Naive thymus-derived CD8-positive, alpha-beta T cell (primary cell): ENCODE measurements at regions of chr12 and their contacts with region 1.

Region 1: DNA sequence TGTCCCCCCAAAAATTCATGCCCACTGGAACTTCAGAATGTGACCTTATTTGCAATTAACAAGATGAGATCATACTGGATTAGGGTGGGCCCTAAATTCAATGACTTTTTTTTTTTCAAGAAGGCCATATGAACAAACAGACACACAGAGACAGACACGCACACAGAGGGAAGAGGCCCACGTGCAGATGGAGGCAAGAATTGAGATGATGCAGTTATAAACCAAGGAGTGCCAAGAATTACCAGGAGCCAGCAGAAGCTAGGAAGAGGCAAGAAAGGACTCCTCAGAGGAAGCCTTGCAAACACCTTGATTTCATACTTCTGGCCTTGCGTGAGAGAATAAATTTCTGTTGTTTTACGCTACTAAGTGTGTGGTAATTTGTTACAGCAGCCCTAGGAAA is 33.4 kb downstream of the NELL2 start:
- DNase-seq: peak in 4 of 10 donors; percentile 33 to 58 (median 50)
- ATAC-seq: peak; percentile 55 to 76
- H3K4me3 Mint-ChIP-seq: peak overlapping the region; percentile 70 to 89 (median 84)
- H3K27ac Mint-ChIP-seq: peak overlapping the region; percentile 87 to 97 (median 94)
- H3K4me1 Mint-ChIP-seq: peaks cover 37 to 84% (median 77%) of the 10 kb centered on the region in 4 donors
- H3K27me3 Mint-ChIP-seq: no peaks in the 10 kb centered on the region

Region 2: GRCh38 chr12:44827832-44828438 is 14.7 kb before region 1 on chr12:
- POLR2A ChIA-PET with region 1: interaction called, 75 read pairs
- DNase-seq: peak in 4 of 10 donors; percentile 34 to 88 (median 76)
- ATAC-seq: peak; percentile 83 to 93
- H3K4me3 Mint-ChIP-seq: peak overlapping the region; percentile 55 to 87 (median 77)
- H3K27ac Mint-ChIP-seq: peak overlapping the region; percentile 92 to 97 (median 96)
- H3K4me1 Mint-ChIP-seq: peaks cover 30 to 74% (median 65%) of the 10 kb centered on the region in 4 donors
- H3K27me3 Mint-ChIP-seq: no peaks in the 10 kb centered on the region

Region 3: GRCh38 chr12:44930972-44931600 is 88.4 kb after region 1 on chr12:
- POLR2A ChIA-PET with region 1: no interaction called
- DNase-seq: peak in 4 of 10 donors; percentile 16 to 79 (median 77)
- ATAC-seq: peak; percentile 74 to 76
- H3K4me3 Mint-ChIP-seq: no peak overlapping the region
- H3K27ac Mint-ChIP-seq: peak overlapping the region in 1 of 10 donors; percentile 29
- H3K4me1 Mint-ChIP-seq: peaks cover 0 to 6% (median 5%) of the 10 kb centered on the region in 4 donors
- H3K27me3 Mint-ChIP-seq: peaks cover 0 to 3% (median 0%) of the 10 kb centered on the region in 5 donors

Region 4: DNA sequence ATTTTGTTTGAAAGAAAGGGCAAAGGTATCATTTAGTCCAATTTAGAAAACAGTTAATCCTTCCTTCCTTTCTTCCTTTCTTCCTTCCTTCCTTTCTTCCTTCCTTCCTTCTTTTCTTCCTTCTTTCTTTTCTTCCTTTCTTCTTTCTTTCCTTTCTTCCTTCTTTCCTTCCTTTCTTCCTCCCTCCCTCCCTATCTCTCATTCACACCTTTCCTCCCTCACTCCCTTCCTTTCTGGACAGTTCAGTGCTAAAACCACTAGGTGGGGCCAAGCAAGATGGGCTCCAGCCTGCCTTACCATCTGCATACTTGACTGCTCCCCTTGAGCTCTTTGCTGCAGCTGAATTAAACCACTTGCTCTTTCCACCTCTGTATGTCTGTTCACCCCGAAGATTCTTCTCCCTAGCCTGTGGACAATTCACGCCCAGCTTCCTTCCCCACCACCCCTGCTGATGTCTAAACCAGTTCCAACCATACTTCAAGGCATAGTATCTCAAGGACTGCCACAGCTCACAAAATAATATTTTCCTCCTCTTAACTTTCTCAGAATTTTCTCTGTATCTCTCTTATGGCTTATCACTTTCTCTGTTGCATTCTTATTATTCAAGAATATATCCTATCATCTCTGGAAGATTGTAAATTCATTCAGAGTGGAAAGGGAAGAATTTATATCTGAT is 130.2 kb after region 1 on chr12:
- POLR2A ChIA-PET with region 1: no interaction called
- DNase-seq: no peak
- ATAC-seq: peak in 1 of 2 donors; percentile 44
- H3K4me3 Mint-ChIP-seq: no peak overlapping the region
- H3K27ac Mint-ChIP-seq: no peak overlapping the region
- H3K4me1 Mint-ChIP-seq: peaks cover 6 to 9% (median 7%) of the 10 kb centered on the region in 4 donors
- H3K27me3 Mint-ChIP-seq: no peaks in the 10 kb centered on the region